Left ventricle myocardium inferior (tissue), 1 donor: ENCODE measurements at regions of chr6 and their contacts with region 1.

Region 1: GRCh38 chr6:84227434-84228197 is at the start of gene CEP162:
- DNase-seq: peak; percentile 94
- H3K4me3 ChIP-seq: peak within 1 kb of the TSS; percentile 95
- H3K27ac ChIP-seq: peak within 1 kb of the TSS; percentile 95
- H3K4me1 ChIP-seq: peaks cover 27% of the 10 kb centered on the region
- H3K27me3 ChIP-seq: peaks cover 8% of the 10 kb centered on the region
- CTCF ChIP-seq: peak; percentile 78
- total RNA-seq, gene CEP162: 4.0 TPM

Region 2: DNA sequence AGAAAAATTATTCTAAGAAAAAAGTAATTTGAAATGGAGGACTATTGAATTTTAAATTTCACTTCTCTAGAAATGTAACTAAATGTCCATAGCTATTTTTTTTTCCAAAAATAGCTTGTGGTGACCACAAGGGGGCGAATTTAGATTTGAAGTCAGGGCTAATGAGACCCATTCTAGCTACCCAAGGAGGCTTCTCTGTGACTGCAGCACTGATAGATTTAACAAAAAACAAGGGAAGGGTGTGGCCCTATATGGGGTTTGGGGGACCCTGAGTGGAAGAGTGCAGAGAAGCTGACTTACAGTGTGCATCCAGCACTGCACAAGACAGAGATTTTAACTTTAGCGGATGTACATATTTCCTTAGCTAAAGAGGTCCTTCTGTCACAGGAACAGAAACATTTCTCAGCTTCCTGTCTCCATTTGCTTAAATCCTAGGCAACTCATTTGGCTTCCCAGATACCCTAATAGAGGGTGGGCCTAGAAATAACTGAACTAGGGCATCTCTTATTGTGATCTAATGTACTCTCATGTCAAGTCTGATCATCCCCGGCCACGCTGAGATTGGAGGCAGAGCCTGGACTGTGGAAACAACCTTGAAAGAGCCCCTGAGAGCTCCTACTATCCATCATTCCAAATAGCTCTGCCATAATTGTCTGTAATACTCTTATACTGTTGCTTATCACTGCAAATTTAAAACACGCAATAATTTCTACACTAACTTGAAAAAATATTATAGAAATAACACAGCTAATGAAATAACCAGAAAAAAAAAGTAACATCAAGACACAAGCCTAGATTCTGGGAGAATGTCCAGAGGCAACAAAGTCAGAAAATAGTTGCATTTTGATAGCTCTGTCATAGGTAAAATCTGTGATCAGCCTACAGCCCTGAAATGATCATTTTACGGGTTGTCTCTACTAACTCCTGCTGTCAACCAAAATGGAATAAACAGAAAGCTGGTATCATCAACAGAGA is 612.3 kb before region 1 on chr6:
- intact Hi-C with region 1: loop called (anchors 10 kb)
- DNase-seq: no peak
- H3K4me3 ChIP-seq: no peak overlapping the region
- H3K27ac ChIP-seq: no peak overlapping the region
- H3K4me1 ChIP-seq: no peaks in the 10 kb centered on the region
- H3K27me3 ChIP-seq: no peaks in the 10 kb centered on the region
- CTCF ChIP-seq: peak; percentile 61